ENCODE measurements at regions of chr11 and their contacts with region 1.

Region 1: DNA sequence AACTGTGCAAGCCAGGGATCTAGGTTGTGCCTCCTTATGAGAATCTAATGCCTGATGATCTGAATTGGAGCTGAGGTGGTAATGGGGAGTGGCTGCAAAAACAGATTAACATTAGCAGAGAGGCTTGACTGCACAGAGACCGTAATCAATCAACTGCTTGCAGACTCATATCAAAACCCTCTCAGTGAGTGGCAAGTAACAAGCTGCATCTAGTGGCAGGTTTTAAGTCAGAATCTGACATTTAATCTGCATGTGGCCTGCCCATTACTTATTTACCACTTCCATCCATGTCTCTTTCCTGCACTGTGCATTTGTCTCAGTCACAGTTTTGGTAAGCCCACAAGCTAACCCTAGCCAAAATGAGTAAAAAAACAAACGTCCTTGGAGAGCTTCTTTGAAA is 11.2 kb downstream of the C11orf58 start:
- DNase-seq: no peak
- ATAC-seq: no peak
- H3K4me3 ChIP-seq: no peak overlapping the region
- H3K27ac ChIP-seq: no peak overlapping the region
- H3K4me1 ChIP-seq: no peaks in the 10 kb centered on the region; a peak in 1 of 5 replicates
- H3K27me3 ChIP-seq: no peaks in the 10 kb centered on the region
- CTCF ChIP-seq: no peak
- EP300 ChIP-seq: no peak
- POLR2A ChIP-seq: no peak
- RAD21 ChIP-seq: no peak

Region 2: DNA sequence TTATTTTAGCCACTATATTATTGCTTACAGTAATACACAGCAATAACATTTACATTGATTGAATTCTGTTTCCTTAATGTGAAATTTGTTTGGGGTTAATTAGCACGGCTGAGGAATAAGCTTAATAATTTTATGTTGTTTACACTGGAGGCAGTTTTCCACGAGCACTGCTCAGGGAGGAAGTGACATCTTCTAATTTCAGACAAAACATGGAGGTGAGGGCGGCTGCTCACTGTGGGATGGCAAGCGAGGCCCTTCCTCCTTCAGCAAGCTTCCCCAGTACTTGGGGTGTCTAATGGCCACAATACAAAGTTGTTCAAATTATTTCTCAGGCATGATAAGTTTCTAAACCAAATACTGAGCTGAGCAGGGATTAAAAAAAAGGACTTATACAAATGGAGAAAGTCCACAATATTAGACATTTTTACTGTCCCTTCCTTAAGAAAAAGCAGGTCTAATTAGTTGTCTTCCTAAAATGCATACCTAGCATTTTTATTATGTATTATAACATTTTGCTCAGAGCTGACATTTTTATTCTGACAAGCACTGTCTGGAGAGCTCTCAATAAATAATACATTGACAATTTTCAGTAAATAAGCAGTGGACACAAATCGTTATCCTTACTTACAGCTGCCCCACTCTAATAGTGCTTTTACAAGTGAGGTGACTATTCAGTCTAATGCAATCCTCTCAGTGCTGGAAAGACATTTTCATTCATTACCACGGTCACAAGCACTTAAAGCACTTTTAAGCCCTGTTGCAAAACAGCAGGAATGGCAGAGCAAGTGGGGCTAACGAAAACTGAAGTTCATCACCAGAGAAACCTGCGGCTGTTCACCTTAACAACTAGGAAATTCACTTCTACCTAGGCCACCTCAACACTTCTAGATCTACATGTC is 449.5 kb before region 1 on chr11:
- CTCF ChIA-PET with region 1: no interaction called
- POLR2A ChIA-PET with region 1: no interaction called
- in situ Hi-C with region 1: no loop called
- intact Hi-C with region 1: no loop called
- DNase-seq: peak in 2 of 4 experiments; percentile 26 to 56
- ATAC-seq: peak; percentile 62
- H3K4me3 ChIP-seq: no peak overlapping the region
- H3K27ac ChIP-seq: peak overlapping the region; percentile 72
- H3K4me1 ChIP-seq: peaks cover 0 to 30% of the 10 kb centered on the region in 2 experiments; a peak in 4 of 5 replicates
- H3K27me3 ChIP-seq: no peaks in the 10 kb centered on the region
- CTCF ChIP-seq: no peak
- EP300 ChIP-seq: no peak
- POLR2A ChIP-seq: no peak
- RAD21 ChIP-seq: no peak

Region 3: DNA sequence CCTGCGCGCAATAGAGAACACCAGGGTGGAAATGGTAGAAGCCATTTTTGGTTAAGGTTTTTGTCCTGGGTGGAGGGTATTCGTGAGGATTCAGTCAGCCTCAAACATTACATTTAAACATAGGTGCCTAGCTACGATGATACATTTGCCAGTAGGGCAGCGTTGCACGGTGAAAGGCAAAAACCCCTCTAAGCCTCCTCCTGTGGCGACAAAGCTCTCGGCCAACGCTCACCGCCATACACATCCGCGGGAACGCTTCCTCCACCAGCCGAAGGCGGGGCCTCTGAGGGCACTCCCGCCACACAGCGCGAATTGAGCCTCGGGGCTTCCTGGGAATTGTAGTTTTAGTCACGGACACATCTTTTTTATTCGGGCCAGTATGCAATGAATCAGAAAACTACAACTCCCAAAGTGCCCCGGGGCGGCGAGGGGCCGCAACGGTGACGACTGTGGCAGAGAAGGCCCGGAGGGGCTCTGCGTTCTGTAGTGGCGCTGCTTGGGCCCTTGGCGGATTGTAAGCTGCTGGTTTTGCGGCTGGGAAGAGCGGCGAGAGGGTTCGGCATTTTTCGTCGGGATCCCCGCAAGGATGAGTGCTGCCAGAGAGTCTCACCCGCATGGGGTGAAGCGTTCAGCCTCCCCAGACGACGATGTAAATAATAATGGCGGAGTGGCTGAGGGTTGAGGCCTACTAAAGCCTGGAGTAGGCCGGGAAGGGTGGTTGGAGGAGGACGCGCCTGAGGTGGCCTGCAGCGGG is 11.3 kb before region 1 on chr11 and contains the start of gene C11orf58:
- CTCF ChIA-PET with region 1: no interaction called
- POLR2A ChIA-PET with region 1: interaction called, 27 read pairs
- in situ Hi-C with region 1: no loop called
- intact Hi-C with region 1: no loop called
- DNase-seq: peak; percentile 82 to 96 (median 85)
- ATAC-seq: peak; percentile 97
- H3K4me3 ChIP-seq: peak within 1 kb of the TSS; percentile 91
- H3K27ac ChIP-seq: peak within 1 kb of the TSS; percentile 96
- H3K4me1 ChIP-seq: peaks cover 11 to 12% of the 10 kb centered on the region in 2 experiments; a peak in 4 of 5 replicates
- H3K27me3 ChIP-seq: no peaks in the 10 kb centered on the region
- CTCF ChIP-seq: no peak; a peak in 1 of 6 replicates
- EP300 ChIP-seq: no peak
- POLR2A ChIP-seq: peak; percentile 96
- RAD21 ChIP-seq: no peak
- polyA plus RNA-seq, gene C11orf58: 395 to 421 TPM

Region 4: GRCh38 chr11:17129003-17129402 is 379.3 kb after region 1 on chr11:
- CTCF ChIA-PET with region 1: no interaction called
- POLR2A ChIA-PET with region 1: no interaction called
- in situ Hi-C with region 1: no loop called
- intact Hi-C with region 1: no loop called
- DNase-seq: no peak
- ATAC-seq: no peak
- H3K4me3 ChIP-seq: no peak overlapping the region
- H3K27ac ChIP-seq: no peak overlapping the region
- H3K4me1 ChIP-seq: no peaks in the 10 kb centered on the region
- H3K27me3 ChIP-seq: no peaks in the 10 kb centered on the region
- CTCF ChIP-seq: no peak
- EP300 ChIP-seq: no peak
- POLR2A ChIP-seq: no peak
- RAD21 ChIP-seq: no peak

Measured in K562 (cell line).